ENCODE measurements at regions of chr14 and their contacts with region 1.

Region 1: DNA sequence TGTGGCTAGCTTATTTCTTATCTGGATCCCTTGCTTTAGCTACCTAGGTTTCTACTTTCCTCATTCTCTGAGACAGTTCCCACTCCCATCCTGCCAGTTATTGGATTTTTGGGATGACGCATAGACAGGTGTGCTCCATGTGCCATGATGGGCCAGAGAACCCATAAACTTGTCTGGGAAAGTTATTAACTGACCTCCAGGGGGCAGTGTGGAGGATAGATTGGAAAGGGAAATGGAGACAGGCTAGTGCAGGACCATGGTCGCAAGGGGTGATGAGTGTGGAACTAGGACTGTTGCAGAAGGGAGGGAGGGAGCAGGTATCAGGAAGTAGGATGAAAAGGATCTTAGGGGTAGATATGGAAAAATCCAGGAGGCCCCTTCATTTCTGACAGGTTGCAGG is 80.3 kb downstream of the ESRRB start:
- DNase-seq: peak; percentile 45
- H3K4me3 ChIP-seq: no peak overlapping the region
- H3K27ac ChIP-seq: no peak overlapping the region
- H3K4me1 ChIP-seq: no peaks in the 10 kb centered on the region
- H3K27me3 ChIP-seq: no peaks in the 10 kb centered on the region
- CTCF ChIP-seq: peak; percentile 55 to 57
- POLR2A ChIP-seq: no peak

Region 2: DNA sequence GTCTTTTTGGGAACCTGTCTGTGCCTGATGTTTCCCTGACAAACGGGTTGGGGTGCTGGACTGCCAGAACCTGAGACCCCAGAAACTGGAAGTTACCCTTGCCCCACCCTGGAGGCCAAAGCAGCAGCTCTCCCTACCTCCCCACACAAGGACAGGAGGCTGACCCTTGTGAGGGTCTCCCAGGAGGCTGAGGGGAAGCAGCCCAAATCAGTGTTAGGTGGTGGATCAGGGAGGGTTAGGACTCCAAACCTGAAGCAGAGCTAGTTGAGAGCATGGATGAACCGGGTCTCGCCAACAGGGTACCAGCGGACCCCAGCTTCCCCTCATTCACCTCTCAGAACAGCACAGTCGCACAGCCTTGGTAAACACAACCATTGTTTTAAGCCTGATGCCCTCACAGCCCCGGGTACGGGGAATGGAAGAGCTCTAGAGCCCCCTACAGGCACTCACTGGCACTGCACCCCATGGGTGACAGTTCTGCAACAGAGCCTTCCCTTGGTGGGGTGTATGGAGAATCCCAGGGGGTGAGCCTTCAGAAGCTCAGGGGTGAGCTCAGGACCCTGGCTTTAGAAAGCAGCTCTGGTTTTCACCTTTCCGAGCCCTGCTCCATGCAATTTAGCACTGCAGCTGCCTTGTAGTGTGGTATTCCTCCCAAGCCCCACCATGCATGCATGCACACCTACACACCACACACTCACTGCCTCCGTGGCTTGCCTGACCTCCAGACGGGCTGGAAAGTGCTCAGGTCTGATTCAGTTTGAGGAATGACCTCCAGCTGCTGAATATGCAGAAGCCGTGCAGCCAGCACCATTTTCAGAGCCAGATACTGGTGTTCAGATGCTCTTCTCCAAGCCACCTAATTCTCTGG is 69.1 kb before region 1 on chr14:
- CTCF ChIA-PET with region 1: no interaction called
- POLR2A ChIA-PET with region 1: no interaction called
- dilution Hi-C with region 1: no loop called
- intact Hi-C with region 1: no loop called
- DNase-seq: peak; percentile 63
- H3K4me3 ChIP-seq: no peak overlapping the region
- H3K27ac ChIP-seq: no peak overlapping the region
- H3K4me1 ChIP-seq: no peaks in the 10 kb centered on the region
- H3K27me3 ChIP-seq: peaks cover 21 to 39% of the 10 kb centered on the region in 2 experiments
- CTCF ChIP-seq: peak; percentile 98
- POLR2A ChIP-seq: no peak

Region 3: DNA sequence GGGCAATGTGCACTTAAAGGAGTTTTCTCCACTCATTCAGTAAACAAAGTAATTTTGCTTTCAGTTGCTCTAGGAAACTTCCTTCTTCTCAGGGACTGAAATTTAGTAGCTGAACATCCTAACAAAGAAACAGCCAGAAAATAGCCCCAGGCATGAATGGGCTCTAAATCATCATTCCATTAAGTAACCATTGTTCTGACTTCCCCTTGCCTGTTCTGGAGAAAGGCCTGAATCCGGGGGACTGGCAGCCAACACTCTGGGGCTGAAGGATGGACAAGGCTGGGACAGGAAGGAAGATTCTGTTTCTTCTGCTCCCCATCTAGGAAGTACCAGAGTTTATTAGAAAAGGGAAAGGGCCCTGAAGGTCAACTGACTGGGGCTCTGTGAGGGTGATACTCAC is 24.2 kb after region 1 on chr14:
- CTCF ChIA-PET with region 1: no interaction called
- POLR2A ChIA-PET with region 1: no interaction called
- dilution Hi-C with region 1: no loop called
- intact Hi-C with region 1: no loop called
- DNase-seq: peak; percentile 11
- H3K4me3 ChIP-seq: no peak overlapping the region
- H3K27ac ChIP-seq: no peak overlapping the region
- H3K4me1 ChIP-seq: no peaks in the 10 kb centered on the region
- H3K27me3 ChIP-seq: no peaks in the 10 kb centered on the region
- CTCF ChIP-seq: no peak
- POLR2A ChIP-seq: no peak

Region 4: GRCh38 chr14:76546426-76547221 is 90.4 kb after region 1 on chr14:
- CTCF ChIA-PET with region 1: interaction called, 3 read pairs
- POLR2A ChIA-PET with region 1: no interaction called
- dilution Hi-C with region 1: no loop called
- intact Hi-C with region 1: loop called (anchors 2 kb)
- DNase-seq: peak; percentile 19
- H3K4me3 ChIP-seq: no peak overlapping the region
- H3K27ac ChIP-seq: no peak overlapping the region
- H3K4me1 ChIP-seq: no peaks in the 10 kb centered on the region
- H3K27me3 ChIP-seq: no peaks in the 10 kb centered on the region
- CTCF ChIP-seq: peak; percentile 44 to 53
- POLR2A ChIP-seq: no peak